ENCODE measurements at regions of chr1 and their contacts with region 1.

Region 1: DNA sequence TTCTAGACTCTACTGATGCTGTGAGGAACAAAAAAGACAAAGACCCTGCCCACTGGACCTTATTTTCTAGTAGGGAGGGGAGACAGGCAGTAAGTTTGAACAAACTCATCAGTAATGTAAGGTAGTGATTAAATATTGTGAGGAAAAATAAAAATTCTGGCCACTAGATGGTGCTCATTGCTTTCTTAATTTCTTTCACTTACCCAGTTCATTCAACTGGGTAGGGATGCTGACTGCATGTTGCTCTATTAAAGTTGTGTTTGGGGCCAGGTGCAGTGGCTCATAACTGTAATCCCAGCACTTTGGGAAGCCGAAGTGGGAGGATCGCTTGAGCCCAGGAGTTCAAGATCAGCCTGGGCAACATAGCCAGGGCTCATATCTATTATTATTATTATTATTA is 6.3 kb upstream of the KYAT3 start:
- DNase-seq: no peak
- ATAC-seq: peak; percentile 87 to 89

Region 2: DNA sequence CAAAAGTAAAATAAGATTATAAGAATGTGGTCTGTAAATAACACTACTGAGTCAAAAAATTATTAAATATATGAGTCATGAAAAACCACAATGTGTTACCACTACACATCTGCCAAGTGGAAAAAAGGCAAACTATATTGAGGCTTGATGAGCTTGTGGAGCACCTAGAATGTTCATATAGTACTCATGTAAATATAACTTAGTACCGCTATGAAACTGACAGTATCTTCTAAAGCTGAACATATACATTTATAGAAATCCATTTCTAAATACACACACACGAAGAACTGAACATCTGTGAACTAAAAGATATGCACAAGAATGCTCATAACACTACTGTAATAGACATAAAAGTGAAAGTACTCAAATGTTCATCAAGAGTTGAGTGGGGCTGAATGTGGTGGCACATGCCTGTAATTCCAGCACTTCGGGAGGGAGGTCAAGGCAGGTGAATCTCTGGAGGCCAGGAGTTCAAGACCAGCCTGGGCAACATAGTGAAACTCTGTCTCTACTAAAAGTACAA is 42.5 kb after region 1 on chr1:
- intact Hi-C with region 1: no loop called
- DNase-seq: no peak
- ATAC-seq: no peak

Region 3: GRCh38 chr1:89274411-89274857 is 275.7 kb after region 1 on chr1:
- intact Hi-C with region 1: loop called (anchors 5 to 10 kb)
- DNase-seq: no peak
- ATAC-seq: peak; percentile 27 to 77

Region 4: GRCh38 chr1:89358287-89358893 is 359.7 kb after region 1 on chr1:
- intact Hi-C with region 1: loop called (anchors 5 to 10 kb)
- DNase-seq: peak; percentile 82
- ATAC-seq: peak; percentile 90 to 95

Region 5: GRCh38 chr1:89454845-89455521 is 456.3 kb after region 1 on chr1:
- intact Hi-C with region 1: loop called in 1 of 2 experiments (anchors 2 kb)
- DNase-seq: peak; percentile 29
- ATAC-seq: peak; percentile 41 to 51

Measured in left cardiac atrium (tissue), 4 donors.